ENCODE measurements at regions of chr4 and their contacts with region 1.

Region 1: DNA sequence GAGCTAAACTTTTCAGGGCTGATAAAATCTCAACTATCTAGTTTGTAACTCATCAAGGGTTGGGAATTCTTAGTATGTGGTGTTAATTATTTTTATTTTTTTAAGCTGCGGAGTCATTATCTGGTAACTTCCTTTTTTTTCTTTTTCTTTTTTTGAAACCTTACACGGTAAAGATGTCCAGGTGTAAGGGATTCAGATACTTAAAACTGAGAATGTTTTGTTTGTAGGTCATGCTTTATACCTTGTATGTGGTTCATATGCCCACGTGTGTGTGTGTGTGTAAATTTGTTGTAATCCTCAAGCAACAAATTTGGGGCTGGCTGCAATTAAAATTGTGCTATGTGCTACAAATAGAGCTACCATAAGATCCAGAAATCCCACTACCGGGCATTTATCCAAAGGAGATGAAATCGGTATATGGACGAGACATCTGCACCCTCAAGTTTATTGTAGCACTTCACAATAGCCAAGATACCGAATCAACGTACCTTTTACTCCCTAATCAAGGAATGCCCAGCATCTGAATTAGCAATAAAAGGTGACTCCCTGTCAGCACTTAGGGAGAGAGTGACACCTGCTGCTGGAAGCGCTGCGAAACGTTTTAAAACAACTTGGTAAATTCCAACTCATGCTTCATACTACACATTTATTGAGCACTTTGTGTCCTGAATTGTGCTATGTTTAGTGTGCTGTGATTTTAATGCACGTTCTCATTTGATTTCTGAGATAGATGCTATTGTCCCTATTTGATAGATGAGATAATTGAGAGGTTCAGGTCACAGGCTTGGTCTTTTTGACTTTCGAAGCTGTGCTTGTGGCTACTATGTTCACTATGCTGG is 16.1 kb downstream of the MSMO1 start:
- DNase-seq: peak; percentile 44
- ATAC-seq: no peak
- H3K4me3 ChIP-seq: no peak overlapping the region
- H3K4me3 Mint-ChIP-seq: no peak overlapping the region
- H3K27ac ChIP-seq: peak overlapping the region in 1 of 2 donors; percentile 2
- H3K27ac Mint-ChIP-seq: no peak overlapping the region
- H3K4me1 ChIP-seq: no peaks in the 10 kb centered on the region
- H3K4me1 Mint-ChIP-seq: peaks cover 2% of the 10 kb centered on the region
- H3K27me3 ChIP-seq: no peaks in the 10 kb centered on the region
- H3K27me3 Mint-ChIP-seq: no peaks in the 10 kb centered on the region
- CTCF ChIP-seq: peak; percentile 35

Region 2: GRCh38 chr4:165199722-165200121 is 143.8 kb before region 1 on chr4:
- CTCF ChIA-PET with region 1: no interaction called
- POLR2A ChIA-PET with region 1: no interaction called
- intact Hi-C with region 1: no loop called
- DNase-seq: no peak
- ATAC-seq: no peak
- H3K4me3 ChIP-seq: no peak overlapping the region
- H3K4me3 Mint-ChIP-seq: no peak overlapping the region
- H3K27ac ChIP-seq: no peak overlapping the region
- H3K27ac Mint-ChIP-seq: no peak overlapping the region
- H3K4me1 ChIP-seq: peaks cover 0 to 2% of the 10 kb centered on the region in 2 donors
- H3K4me1 Mint-ChIP-seq: peaks cover 11% of the 10 kb centered on the region
- H3K27me3 ChIP-seq: no peaks in the 10 kb centered on the region
- H3K27me3 Mint-ChIP-seq: no peaks in the 10 kb centered on the region
- CTCF ChIP-seq: no peak

Region 3: DNA sequence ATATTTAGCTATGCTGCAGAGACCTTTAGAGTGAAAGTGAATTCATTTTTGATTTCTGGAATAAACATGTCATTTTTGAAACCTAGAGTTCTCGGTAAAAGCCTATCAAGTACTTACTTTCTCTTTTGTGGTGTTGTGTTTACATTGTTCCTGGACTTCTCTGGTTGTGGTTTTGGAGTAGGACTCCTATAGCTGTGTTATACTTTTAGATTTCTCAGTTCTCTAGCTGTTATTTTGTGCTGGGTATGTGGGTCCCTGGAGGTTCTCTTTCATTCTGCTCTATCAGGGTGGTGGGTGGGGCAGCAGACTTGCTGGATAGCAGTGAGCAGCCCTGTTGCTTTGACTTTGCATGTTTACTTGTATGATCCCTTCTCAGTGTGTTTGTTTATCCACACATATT is 41.7 kb before region 1 on chr4:
- CTCF ChIA-PET with region 1: interaction called, 3 read pairs
- POLR2A ChIA-PET with region 1: no interaction called
- intact Hi-C with region 1: loop called (anchors 5 kb)
- DNase-seq: peak; percentile 16
- ATAC-seq: no peak
- H3K4me3 ChIP-seq: peak overlapping the region in 2 of 5 experiments; percentile 13 to 42
- H3K4me3 Mint-ChIP-seq: peak overlapping the region; percentile 66
- H3K27ac ChIP-seq: peak overlapping the region; percentile 28 to 65
- H3K27ac Mint-ChIP-seq: peak overlapping the region; percentile 44
- H3K4me1 ChIP-seq: peaks cover 4 to 6% of the 10 kb centered on the region in 2 donors
- H3K4me1 Mint-ChIP-seq: peaks cover 10% of the 10 kb centered on the region
- H3K27me3 ChIP-seq: no peaks in the 10 kb centered on the region
- H3K27me3 Mint-ChIP-seq: no peaks in the 10 kb centered on the region
- CTCF ChIP-seq: no peak

Region 4: GRCh38 chr4:165378745-165379677 is 35.4 kb after region 1 on chr4 and contains the start of gene CPE:
- CTCF ChIA-PET with region 1: no interaction called
- POLR2A ChIA-PET with region 1: no interaction called
- intact Hi-C with region 1: no loop called
- DNase-seq: peak; percentile 72
- ATAC-seq: peak; percentile 98
- H3K4me3 ChIP-seq: peak within 1 kb of the TSS in 4 of 5 experiments; percentile 26 to 52 (median 36)
- H3K4me3 Mint-ChIP-seq: peak within 1 kb of the TSS; percentile 83
- H3K27ac ChIP-seq: no peak within 1 kb of the TSS
- H3K27ac Mint-ChIP-seq: no peak within 1 kb of the TSS
- H3K4me1 ChIP-seq: peaks cover 10 to 11% of the 10 kb centered on the region in 2 donors
- H3K4me1 Mint-ChIP-seq: peaks cover 8% of the 10 kb centered on the region
- H3K27me3 ChIP-seq: peaks cover 0 to 45% (median 26%) of the 10 kb centered on the region in 4 experiments
- H3K27me3 Mint-ChIP-seq: peaks cover 56% of the 10 kb centered on the region
- CTCF ChIP-seq: no peak
- total RNA-seq, gene CPE: not detected in 2 replicates

Measured in B cell (primary cell).